Activated CD4-positive, alpha-beta T cell treated with anti-CD3 and anti-CD28 coated beads for 36 hours (primary cell): ENCODE measurements at regions of chr17 and their contacts with region 1.

Region 1: DNA sequence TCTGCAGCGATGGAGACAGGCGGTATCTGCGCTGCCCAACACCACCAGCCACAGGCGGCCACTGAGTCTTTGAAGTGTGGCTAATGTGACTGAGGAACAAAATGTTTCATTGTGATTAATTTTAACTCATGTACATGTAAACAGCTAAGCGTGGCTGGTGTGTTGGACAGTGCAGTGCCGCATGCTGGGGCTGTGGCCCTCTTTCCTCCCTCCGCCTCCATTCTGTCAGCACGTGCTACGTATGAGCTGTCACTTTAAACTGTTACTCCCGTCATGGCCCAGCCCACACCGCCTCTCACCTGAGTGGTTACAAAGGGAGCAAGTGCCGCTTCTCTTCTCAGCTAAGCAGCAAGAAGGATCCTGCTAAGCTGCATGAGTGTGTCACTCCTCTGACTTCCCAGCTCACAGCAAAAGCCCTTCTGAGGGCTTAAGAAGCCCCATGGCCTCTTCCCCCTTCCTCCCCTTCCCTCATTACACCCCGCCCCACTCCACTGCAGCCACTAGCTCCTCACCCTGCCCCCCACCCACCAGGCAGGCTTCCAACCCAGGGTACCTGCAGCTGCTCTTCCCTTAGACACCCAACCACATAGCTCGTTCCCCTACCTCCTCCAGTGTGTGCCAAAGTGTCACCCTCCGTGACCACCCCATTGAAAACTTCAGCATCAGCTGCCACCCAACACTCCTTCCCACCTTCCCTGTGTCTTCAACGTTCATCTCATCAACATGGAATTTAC is 15.0 kb downstream of the HASPIN start:
- DNase-seq: peak; percentile 88
- ATAC-seq: peak; percentile 89
- H3K4me3 Mint-ChIP-seq: no peak overlapping the region
- H3K27ac Mint-ChIP-seq: peak overlapping the region; percentile 14
- H3K4me1 Mint-ChIP-seq: peaks cover 34% of the 10 kb centered on the region
- H3K27me3 Mint-ChIP-seq: no peaks in the 10 kb centered on the region

Region 2: DNA sequence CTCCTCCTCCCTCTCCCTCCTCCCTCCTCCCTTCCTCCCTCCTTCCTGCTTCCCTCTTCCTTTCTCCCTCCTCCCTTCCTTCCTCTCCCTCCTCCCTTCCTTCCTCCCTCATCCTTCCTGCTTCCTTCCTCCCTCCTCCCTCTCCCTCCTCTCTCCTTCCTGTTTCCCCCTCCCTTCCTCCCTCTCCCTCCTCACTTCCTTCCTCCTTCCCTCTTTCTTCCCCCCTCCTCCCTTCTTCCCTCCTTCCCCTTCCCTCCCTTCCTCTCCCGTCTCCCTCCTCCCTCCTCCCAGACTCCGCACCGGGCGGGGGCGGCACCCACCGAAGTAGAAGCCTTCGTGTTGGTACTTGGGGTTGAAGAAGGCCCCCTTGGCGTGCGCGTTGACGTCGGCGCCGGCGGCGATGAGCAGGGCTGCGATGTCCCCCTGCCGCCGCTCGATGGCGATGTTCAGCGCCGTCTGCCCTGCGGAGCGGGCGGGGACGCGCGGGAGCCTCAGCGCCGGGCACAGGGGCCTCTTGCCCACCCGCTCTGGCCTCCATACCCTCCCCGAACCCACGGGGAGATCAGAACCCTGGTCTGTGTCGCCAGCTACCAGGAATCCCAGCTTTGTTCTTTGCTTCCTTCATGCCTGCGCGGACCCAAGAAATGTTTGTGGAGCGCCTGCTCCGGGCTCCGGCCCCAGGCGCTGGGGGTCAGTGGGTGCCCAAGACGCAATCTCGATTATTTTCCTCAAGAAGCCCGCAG is 203.3 kb before region 1 on chr17:
- CTCF ChIA-PET with region 1: no interaction called
- POLR2A ChIA-PET with region 1: no interaction called
- intact Hi-C with region 1: no loop called
- DNase-seq: peak; percentile 84
- ATAC-seq: peak; percentile 96
- H3K4me3 Mint-ChIP-seq: peak overlapping the region; percentile 21
- H3K27ac Mint-ChIP-seq: no peak overlapping the region
- H3K4me1 Mint-ChIP-seq: peaks cover 5% of the 10 kb centered on the region
- H3K27me3 Mint-ChIP-seq: peaks cover 3% of the 10 kb centered on the region

Region 3: GRCh38 chr17:3630781-3631180 is 107.9 kb before region 1 on chr17:
- CTCF ChIA-PET with region 1: no interaction called
- POLR2A ChIA-PET with region 1: no interaction called
- intact Hi-C with region 1: no loop called
- DNase-seq: no peak
- ATAC-seq: no peak
- H3K4me3 Mint-ChIP-seq: no peak overlapping the region
- H3K27ac Mint-ChIP-seq: no peak overlapping the region
- H3K4me1 Mint-ChIP-seq: peaks cover 9% of the 10 kb centered on the region
- H3K27me3 Mint-ChIP-seq: no peaks in the 10 kb centered on the region

Region 4: GRCh38 chr17:3695723-3696411 is 42.9 kb before region 1 on chr17 and contains the start of gene P2RX5:
- CTCF ChIA-PET with region 1: interaction called, 10 read pairs
- POLR2A ChIA-PET with region 1: interaction called, 3 read pairs
- intact Hi-C with region 1: no loop called
- DNase-seq: peak; percentile 67
- ATAC-seq: peak; percentile 48
- H3K4me3 Mint-ChIP-seq: peak within 1 kb of the TSS; percentile 81
- H3K27ac Mint-ChIP-seq: peak within 1 kb of the TSS; percentile 94
- H3K4me1 Mint-ChIP-seq: peaks cover 15% of the 10 kb centered on the region
- H3K27me3 Mint-ChIP-seq: no peaks in the 10 kb centered on the region
- total RNA-seq, gene P2RX5: 69.7 to 77.5 TPM

Region 5: GRCh38 chr17:3754458-3755334 is 16.0 kb after region 1 on chr17:
- CTCF ChIA-PET with region 1: interaction called, 24 read pairs
- POLR2A ChIA-PET with region 1: interaction called, 9 read pairs
- intact Hi-C with region 1: no loop called
- DNase-seq: peak; percentile 88
- ATAC-seq: peak; percentile 94
- H3K4me3 Mint-ChIP-seq: no peak overlapping the region
- H3K27ac Mint-ChIP-seq: no peak overlapping the region
- H3K4me1 Mint-ChIP-seq: peaks cover 21% of the 10 kb centered on the region
- H3K27me3 Mint-ChIP-seq: no peaks in the 10 kb centered on the region

Region 6: DNA sequence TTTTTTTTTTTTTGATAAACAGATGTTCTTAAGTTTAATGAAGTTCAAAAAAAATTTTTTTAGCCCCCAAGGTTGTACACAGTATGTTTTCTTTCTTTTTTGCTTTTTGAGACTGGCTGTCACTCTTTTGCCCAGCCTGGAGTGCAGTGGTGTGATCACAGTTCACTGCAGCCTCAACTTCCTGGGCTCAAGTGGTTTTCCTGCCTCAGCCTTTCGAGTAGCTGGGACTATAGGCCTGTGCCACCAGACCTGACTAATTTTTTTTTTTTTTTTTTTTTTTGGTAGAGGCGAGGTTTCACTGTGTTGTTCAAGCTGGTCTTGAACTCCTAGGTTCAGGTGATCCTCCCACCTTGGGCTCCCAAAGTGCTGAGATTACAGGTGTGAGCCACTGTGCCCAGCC is 49.5 kb after region 1 on chr17:
- CTCF ChIA-PET with region 1: interaction called, 17 read pairs
- POLR2A ChIA-PET with region 1: no interaction called
- intact Hi-C with region 1: loop called (anchors 2 to 5 kb)
- DNase-seq: no peak
- ATAC-seq: peak; percentile 21
- H3K4me3 Mint-ChIP-seq: no peak overlapping the region
- H3K27ac Mint-ChIP-seq: no peak overlapping the region
- H3K4me1 Mint-ChIP-seq: peaks cover 20% of the 10 kb centered on the region
- H3K27me3 Mint-ChIP-seq: no peaks in the 10 kb centered on the region

Region 7: DNA sequence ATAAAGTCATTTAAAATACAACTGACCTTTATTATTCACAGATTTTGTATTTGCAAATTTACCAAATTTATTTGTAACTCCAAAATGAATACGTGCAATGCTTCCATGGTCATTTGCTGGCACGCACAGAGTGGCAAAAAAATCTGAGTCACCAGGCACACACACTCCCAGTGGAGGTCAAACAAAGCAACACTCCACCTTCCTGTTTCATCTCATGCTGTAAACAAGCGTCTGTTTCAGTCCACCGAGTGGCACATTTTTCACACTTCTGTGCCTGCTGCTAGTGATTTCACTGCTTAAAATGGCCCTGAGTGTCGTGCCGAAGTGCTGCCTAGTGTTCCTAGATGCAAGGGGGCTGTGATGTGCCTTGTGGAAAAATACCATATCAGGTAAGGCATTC is 80.1 kb after region 1 on chr17:
- CTCF ChIA-PET with region 1: interaction called, 25 read pairs
- POLR2A ChIA-PET with region 1: no interaction called
- intact Hi-C with region 1: no loop called
- DNase-seq: no peak
- ATAC-seq: no peak
- H3K4me3 Mint-ChIP-seq: no peak overlapping the region
- H3K27ac Mint-ChIP-seq: no peak overlapping the region
- H3K4me1 Mint-ChIP-seq: no peaks in the 10 kb centered on the region
- H3K27me3 Mint-ChIP-seq: no peaks in the 10 kb centered on the region

Region 8: DNA sequence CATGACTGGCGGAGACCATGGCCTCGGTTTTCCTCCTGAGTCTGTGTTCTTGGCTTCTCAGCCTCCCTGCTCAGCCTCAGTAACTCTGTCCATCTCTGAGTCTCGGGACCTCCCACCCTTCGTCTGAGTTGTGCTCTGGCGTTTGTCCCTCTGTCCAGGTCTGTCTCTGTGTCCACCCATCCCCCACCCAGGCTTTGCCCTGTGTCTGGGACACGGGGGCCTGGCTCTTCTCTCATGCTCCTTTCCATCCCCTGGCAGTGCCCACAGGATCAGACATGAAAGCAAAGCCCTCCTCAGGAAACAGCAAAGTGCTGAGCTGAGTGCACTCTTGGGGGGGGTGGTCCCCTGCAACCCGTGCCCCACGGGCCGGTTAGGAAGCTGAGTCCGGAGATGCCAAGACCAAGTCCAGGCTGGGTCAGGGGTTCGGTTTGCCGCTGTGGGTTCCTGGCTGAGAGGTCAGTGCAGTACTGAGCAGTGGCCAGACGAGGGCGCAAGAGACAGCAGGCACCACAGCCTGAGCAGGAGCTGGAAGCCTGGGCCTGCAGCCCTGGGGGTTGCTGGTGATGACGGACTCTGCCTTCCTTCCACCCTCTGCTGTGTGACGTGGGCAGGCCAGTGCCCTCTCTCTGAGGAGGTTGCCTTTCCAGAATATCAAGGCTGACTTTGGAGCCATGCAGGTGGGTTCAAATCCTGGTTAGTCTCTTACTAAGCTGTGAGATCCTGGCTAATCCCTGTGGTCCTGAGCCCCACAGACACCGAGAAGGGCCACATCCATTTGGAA is 175.0 kb after region 1 on chr17:
- CTCF ChIA-PET with region 1: interaction called, 19 read pairs
- POLR2A ChIA-PET with region 1: no interaction called
- intact Hi-C with region 1: loop called (anchors 5 kb)
- DNase-seq: peak; percentile 92
- ATAC-seq: peak; percentile 71
- H3K4me3 Mint-ChIP-seq: no peak overlapping the region
- H3K27ac Mint-ChIP-seq: peak overlapping the region; percentile 42
- H3K4me1 Mint-ChIP-seq: peaks cover 52% of the 10 kb centered on the region
- H3K27me3 Mint-ChIP-seq: no peaks in the 10 kb centered on the region

Region 9: GRCh38 chr17:3944485-3945388 is 206.0 kb after region 1 on chr17:
- CTCF ChIA-PET with region 1: no interaction called
- POLR2A ChIA-PET with region 1: no interaction called
- intact Hi-C with region 1: no loop called
- DNase-seq: peak; percentile 72
- ATAC-seq: peak; percentile 88
- H3K4me3 Mint-ChIP-seq: no peak overlapping the region
- H3K27ac Mint-ChIP-seq: no peak overlapping the region
- H3K4me1 Mint-ChIP-seq: no peaks in the 10 kb centered on the region
- H3K27me3 Mint-ChIP-seq: no peaks in the 10 kb centered on the region